Transverse colon (tissue), 4 donors: ENCODE measurements at regions of chr11 and their contacts with region 1.

Region 1: DNA sequence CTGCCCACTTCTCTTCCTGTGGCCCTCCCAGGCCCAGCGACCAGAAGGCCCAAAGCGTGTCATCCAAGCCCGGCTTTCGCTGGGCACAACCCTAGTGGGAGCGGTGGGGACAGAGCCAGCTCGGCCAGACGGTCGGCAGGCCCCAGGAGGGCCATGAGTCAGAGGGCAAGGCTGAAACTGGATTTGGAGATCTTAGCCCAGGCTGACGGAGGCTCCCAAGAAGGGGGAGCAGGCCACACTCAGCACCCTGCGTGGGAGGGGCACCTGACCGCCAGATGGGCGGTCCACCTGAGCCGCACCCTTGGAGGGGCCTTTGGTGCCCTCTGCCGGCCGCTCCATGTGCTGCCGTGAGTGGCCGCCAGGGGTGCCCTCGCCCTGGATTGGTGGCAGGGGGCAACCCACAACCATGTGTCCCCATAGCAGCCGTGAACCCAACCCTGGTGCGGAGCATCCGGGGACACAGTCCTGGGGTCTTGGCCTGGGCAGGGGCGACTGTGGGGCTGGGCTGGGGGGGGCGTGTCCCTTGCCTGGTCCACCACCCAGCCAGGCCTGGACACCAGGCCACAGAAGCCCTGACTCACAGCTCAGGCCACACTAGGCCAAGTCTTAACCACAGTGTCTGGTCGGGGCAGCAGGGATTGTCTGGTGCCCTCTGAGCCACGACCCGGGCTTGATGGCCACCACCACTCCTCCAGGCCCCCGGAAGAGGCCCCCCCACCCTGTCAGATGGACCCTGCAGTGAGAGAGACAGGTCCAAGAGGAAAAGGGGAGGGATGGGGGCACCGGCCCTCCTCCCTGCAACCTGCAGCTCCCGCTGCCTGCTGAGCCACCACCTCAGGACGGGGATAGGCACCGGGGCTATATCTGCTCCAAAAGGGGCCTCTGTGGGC is 19.2 kb upstream of the TALDO1 start:
- DNase-seq: peak; percentile 87
- H3K4me3 ChIP-seq: no peak overlapping the region
- H3K27ac ChIP-seq: peak overlapping the region in 2 of 4 donors; percentile 11 to 19
- H3K4me1 ChIP-seq: peaks cover 8 to 35% (median 29%) of the 10 kb centered on the region in 4 donors
- H3K27me3 ChIP-seq: peaks cover 54% of the 10 kb centered on the region
- CTCF ChIP-seq: peak; percentile 97 to 99 (median 98)
- EP300 ChIP-seq: no peak
- POLR2A ChIP-seq: no peak

Region 2: GRCh38 chr11:554824-555472 is 173.2 kb before region 1 on chr11:
- in situ Hi-C with region 1: no loop called
- intact Hi-C with region 1: loop called (anchors 5 kb)
- DNase-seq: peak; percentile 81
- H3K4me3 ChIP-seq: peak overlapping the region in 3 of 4 donors; percentile 5 to 52 (median 34)
- H3K27ac ChIP-seq: peak overlapping the region in 1 of 4 donors; percentile 4
- H3K4me1 ChIP-seq: peaks cover 14 to 33% (median 25%) of the 10 kb centered on the region in 4 donors
- H3K27me3 ChIP-seq: peaks cover 56% of the 10 kb centered on the region
- CTCF ChIP-seq: peak; percentile 32 to 67 (median 62)
- EP300 ChIP-seq: no peak
- POLR2A ChIP-seq: no peak

Region 3: DNA sequence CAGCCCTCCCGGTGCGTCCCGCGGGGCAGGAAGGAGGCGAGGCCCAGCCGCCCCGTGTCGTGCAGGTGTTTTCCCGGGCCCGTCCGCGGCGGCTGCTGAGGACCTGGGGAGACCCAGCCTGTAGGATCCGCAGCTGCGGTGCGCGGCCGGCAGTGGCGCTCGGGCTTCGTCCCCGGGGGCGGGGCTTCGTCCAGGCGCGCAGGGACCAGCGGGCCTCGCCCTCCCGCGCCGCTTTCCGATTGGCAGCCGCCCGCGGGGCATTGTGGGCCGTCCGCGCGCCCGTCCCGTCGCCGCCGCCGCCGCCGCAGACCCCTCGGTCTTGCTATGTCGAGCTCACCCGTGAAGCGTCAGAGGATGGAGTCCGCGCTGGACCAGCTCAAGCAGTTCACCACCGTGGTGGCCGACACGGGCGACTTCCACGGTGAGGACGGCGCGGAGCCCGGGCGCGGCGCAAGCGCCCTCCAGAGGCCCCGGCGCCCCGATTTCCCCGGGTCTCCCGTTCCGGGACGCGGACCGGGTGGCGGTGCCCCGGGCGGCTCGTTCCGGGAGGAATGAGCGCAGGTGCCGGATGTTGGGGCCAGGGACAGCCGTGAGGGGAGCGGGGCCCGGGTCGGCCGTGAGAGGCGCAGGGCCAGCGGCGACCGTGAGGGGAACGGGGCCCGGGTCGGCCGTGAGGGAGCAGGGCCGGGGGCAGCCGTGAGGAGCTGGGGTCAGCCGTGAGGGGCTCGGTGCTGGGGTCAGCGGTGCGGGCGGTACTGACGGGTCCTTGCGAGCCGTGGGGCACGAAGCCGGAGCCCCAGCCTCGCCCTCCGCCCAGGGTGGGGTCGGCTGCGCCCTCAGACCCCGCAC is 19.3 kb after region 1 on chr11 and contains the start of gene TALDO1:
- in situ Hi-C with region 1: no loop called
- intact Hi-C with region 1: no loop called
- DNase-seq: peak; percentile 94
- H3K4me3 ChIP-seq: peak within 1 kb of the TSS; percentile 85 to 96 (median 88)
- H3K27ac ChIP-seq: peak within 1 kb of the TSS; percentile 84 to 90 (median 90)
- H3K4me1 ChIP-seq: peaks cover 10 to 39% (median 28%) of the 10 kb centered on the region in 4 donors
- H3K27me3 ChIP-seq: no peaks in the 10 kb centered on the region
- CTCF ChIP-seq: peak in 2 of 5 experiments; percentile 8 to 33
- EP300 ChIP-seq: no peak
- POLR2A ChIP-seq: peak; percentile 50
- total RNA-seq, gene TALDO1: 124 to 164 (median 141) TPM